Activated CD8-positive, alpha-beta T cell treated with anti-CD3 and anti-CD28 coated beads for 36 hours (primary cell): ENCODE measurements at regions of chr20 and their contacts with region 1.

Region 1: GRCh38 chr20:51014797-51015722 is 7.8 kb downstream of the KCNG1 start:
- DNase-seq: peak; percentile 46
- ATAC-seq: no peak
- H3K4me3 Mint-ChIP-seq: no peak overlapping the region
- H3K27ac Mint-ChIP-seq: no peak overlapping the region
- H3K4me1 Mint-ChIP-seq: no peaks in the 10 kb centered on the region
- H3K27me3 Mint-ChIP-seq: peaks cover 32% of the 10 kb centered on the region
- CTCF ChIP-seq: peak; percentile 78

Region 2: GRCh38 chr20:50837532-50838506 is 177.2 kb before region 1 on chr20:
- CTCF ChIA-PET with region 1: no interaction called
- POLR2A ChIA-PET with region 1: no interaction called
- intact Hi-C with region 1: no loop called
- DNase-seq: peak; percentile 73
- ATAC-seq: peak; percentile 88
- H3K4me3 Mint-ChIP-seq: no peak overlapping the region
- H3K27ac Mint-ChIP-seq: peak overlapping the region; percentile 63
- H3K4me1 Mint-ChIP-seq: peaks cover 23% of the 10 kb centered on the region
- H3K27me3 Mint-ChIP-seq: no peaks in the 10 kb centered on the region
- CTCF ChIP-seq: no peak

Region 3: GRCh38 chr20:50943069-50943468 is 72.0 kb before region 1 on chr20:
- CTCF ChIA-PET with region 1: no interaction called
- POLR2A ChIA-PET with region 1: no interaction called
- intact Hi-C with region 1: no loop called
- DNase-seq: no peak
- ATAC-seq: no peak
- H3K4me3 Mint-ChIP-seq: no peak overlapping the region
- H3K27ac Mint-ChIP-seq: no peak overlapping the region
- H3K4me1 Mint-ChIP-seq: no peaks in the 10 kb centered on the region
- H3K27me3 Mint-ChIP-seq: no peaks in the 10 kb centered on the region
- CTCF ChIP-seq: no peak

Region 4: DNA sequence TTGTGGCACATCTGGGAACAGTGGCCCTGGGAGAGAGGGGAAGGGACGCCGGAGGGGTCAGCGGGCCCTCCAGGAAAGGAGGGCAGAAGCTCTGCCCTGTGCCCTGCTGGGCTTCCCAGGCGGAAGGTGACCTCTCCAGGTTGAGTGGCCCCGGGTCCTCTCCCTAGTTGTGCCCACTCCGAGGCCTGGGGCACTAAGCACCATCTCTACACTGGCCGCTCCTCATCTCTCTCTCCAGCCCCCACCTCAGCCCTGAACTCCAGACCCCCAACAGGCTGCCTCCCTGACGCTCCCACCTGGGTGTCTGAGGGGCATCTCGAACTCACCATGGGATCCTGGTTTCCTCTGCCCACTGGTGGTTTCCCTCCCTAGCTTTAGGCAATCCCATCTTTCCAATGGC is 10.3 kb before region 1 on chr20:
- CTCF ChIA-PET with region 1: interaction called, 12 read pairs
- POLR2A ChIA-PET with region 1: no interaction called
- intact Hi-C with region 1: no loop called
- DNase-seq: no peak
- ATAC-seq: no peak
- H3K4me3 Mint-ChIP-seq: no peak overlapping the region
- H3K27ac Mint-ChIP-seq: no peak overlapping the region
- H3K4me1 Mint-ChIP-seq: no peaks in the 10 kb centered on the region
- H3K27me3 Mint-ChIP-seq: peaks cover 16% of the 10 kb centered on the region
- CTCF ChIP-seq: no peak

Region 5: GRCh38 chr20:51026269-51026668 is 11.2 kb after region 1 on chr20:
- CTCF ChIA-PET with region 1: interaction called, 13 read pairs
- POLR2A ChIA-PET with region 1: interaction called, 3 read pairs
- intact Hi-C with region 1: no loop called
- DNase-seq: no peak
- ATAC-seq: no peak
- H3K4me3 Mint-ChIP-seq: no peak overlapping the region
- H3K27ac Mint-ChIP-seq: no peak overlapping the region
- H3K4me1 Mint-ChIP-seq: peaks cover 11% of the 10 kb centered on the region
- H3K27me3 Mint-ChIP-seq: peaks cover 66% of the 10 kb centered on the region
- CTCF ChIP-seq: no peak

Region 6: DNA sequence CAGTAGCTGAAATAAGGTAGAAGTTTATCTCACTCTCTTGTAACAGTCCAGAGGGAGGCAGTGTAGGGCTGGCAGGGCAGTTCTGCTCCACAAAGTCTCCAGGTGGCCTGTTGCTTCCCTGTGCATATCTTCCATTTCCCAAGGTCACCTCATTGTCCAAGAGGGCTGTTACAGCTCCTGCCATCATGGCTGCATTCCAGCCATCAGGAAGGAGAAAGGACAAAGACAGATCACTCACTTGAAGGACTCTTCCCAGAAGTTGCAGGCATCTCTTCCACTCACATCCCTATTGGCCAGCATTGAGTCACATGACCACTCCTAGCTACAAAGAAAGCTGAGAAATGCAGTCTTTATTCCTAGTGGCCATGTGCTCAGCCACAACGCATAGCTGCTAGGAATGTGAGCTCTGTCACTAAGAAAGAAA is 157.9 kb after region 1 on chr20:
- CTCF ChIA-PET with region 1: no interaction called
- POLR2A ChIA-PET with region 1: no interaction called
- intact Hi-C with region 1: no loop called
- DNase-seq: no peak
- ATAC-seq: no peak
- H3K4me3 Mint-ChIP-seq: no peak overlapping the region
- H3K27ac Mint-ChIP-seq: no peak overlapping the region
- H3K4me1 Mint-ChIP-seq: no peaks in the 10 kb centered on the region
- H3K27me3 Mint-ChIP-seq: peaks cover 25% of the 10 kb centered on the region
- CTCF ChIP-seq: no peak